PC-3 (cell line): ENCODE measurements at regions of chr13 and their contacts with region 1.

Region 1: DNA sequence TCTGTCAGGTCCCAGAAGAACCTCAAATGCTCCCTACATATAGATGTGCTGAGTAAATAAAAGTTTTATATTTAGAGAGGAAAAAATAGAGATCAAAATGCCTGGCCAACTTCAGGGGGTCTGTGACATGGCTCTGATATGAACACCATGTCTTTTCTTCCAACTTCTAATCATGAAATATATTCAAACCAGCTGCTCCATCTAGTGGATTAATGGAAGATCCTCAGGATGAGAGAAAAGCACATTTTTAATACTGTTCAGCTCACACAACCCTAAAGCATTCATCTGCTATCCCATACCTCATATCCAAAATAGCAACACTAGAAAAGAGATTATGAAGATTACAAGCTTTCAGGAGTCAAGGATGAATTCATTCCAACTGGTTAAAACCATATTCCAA is 56.0 kb upstream of the DOCK9 start:
- DNase-seq: peak; percentile 48
- ATAC-seq: peak; percentile 66
- H3K4me3 ChIP-seq: no peak overlapping the region
- H3K27ac ChIP-seq: no peak overlapping the region
- H3K4me1 ChIP-seq: peaks cover 9% of the 10 kb centered on the region
- H3K27me3 ChIP-seq: no peaks in the 10 kb centered on the region
- CTCF ChIP-seq: peak; percentile 69

Region 2: GRCh38 chr13:98890186-98890585 is 143.6 kb before region 1 on chr13:
- CTCF ChIA-PET with region 1: interaction called, 5 read pairs
- POLR2A ChIA-PET with region 1: no interaction called
- intact Hi-C with region 1: loop called (anchors 5 kb)
- DNase-seq: peak; percentile 90
- ATAC-seq: peak; percentile 88
- H3K4me3 ChIP-seq: peak overlapping the region; percentile 43; the same call in 1 of the 2 replicates
- H3K27ac ChIP-seq: peak overlapping the region; percentile 77
- H3K4me1 ChIP-seq: peaks cover 26% of the 10 kb centered on the region
- H3K27me3 ChIP-seq: no peaks in the 10 kb centered on the region
- CTCF ChIP-seq: no peak

Region 3: GRCh38 chr13:99103536-99103935 is 69.7 kb after region 1 on chr13:
- CTCF ChIA-PET with region 1: no interaction called
- POLR2A ChIA-PET with region 1: interaction called, 14 read pairs
- intact Hi-C with region 1: no loop called
- DNase-seq: no peak
- ATAC-seq: no peak
- H3K4me3 ChIP-seq: no peak overlapping the region
- H3K27ac ChIP-seq: no peak overlapping the region
- H3K4me1 ChIP-seq: no peaks in the 10 kb centered on the region
- H3K27me3 ChIP-seq: no peaks in the 10 kb centered on the region
- CTCF ChIP-seq: no peak